ENCODE measurements at regions of chr12 and their contacts with region 1.

Region 1: GRCh38 chr12:89678225-89678624 is 30.4 kb downstream of the ATP2B1 start:
- DNase-seq: no peak
- ATAC-seq: peak; percentile 18
- H3K4me3 ChIP-seq: no peak overlapping the region
- H3K4me3 Mint-ChIP-seq: peak overlapping the region in 2 of 10 donors; percentile 9 to 25
- H3K27ac ChIP-seq: no peak overlapping the region
- H3K27ac Mint-ChIP-seq: peak overlapping the region in 1 of 9 donors; percentile 24
- H3K4me1 ChIP-seq: peaks cover 5 to 12% of the 10 kb centered on the region in 2 donors
- H3K4me1 Mint-ChIP-seq: peaks cover 6 to 85% (median 61%) of the 10 kb centered on the region in 7 donors
- H3K27me3 ChIP-seq: no peaks in the 10 kb centered on the region
- H3K27me3 Mint-ChIP-seq: no peaks in the 10 kb centered on the region

Region 2: DNA sequence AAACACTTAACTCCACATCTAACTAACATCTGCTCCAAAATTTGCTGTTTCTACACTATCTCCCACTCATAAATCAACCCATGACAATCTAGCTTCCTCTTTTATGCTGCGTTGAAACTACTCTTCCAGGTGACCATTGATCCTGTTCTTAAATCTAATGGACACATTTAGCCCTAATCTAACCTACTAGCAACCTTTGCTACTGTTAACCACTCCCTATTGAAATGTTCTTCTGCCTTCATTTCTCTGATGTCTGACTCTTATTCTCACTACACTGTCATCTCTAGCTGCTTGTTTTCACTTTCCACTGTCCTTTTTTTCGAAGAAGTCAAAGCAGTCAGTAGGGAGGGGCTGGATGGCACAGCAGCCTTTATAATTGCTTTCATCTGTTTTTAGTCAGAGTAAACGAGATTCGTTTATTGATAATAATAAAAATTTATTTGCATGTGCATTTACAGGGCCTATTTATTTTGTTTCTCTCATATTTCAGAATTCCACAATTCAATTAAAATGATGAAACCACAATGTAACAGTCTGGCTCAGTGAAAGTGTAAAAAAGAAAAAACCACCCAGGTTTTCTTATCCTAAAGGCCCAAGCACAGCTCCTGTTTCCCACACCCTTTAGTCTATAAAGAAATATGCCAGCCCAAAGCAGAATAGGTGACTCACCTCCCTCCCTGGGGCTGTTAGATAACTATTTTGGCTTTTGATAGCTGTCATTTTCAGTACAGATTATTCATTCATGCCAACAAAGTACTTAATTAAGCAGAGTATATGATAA is 14.5 kb before region 1 on chr12:
- CTCF ChIA-PET with region 1: no interaction called
- POLR2A ChIA-PET with region 1: interaction called, 3 read pairs
- intact Hi-C with region 1: loop called in 1 of 2 experiments (anchors 1 kb)
- DNase-seq: peak in 3 of 9 donors; percentile 2 to 15 (median 10)
- ATAC-seq: peak; percentile 62
- H3K4me3 ChIP-seq: no peak overlapping the region
- H3K4me3 Mint-ChIP-seq: peak overlapping the region in 9 of 10 donors; percentile 3 to 48 (median 11)
- H3K27ac ChIP-seq: no peak overlapping the region
- H3K27ac Mint-ChIP-seq: peak overlapping the region in 6 of 9 donors; percentile 21 to 28 (median 27)
- H3K4me1 ChIP-seq: peaks cover 30 to 36% of the 10 kb centered on the region in 2 donors
- H3K4me1 Mint-ChIP-seq: peaks cover 16 to 78% (median 74%) of the 10 kb centered on the region in 7 donors
- H3K27me3 ChIP-seq: no peaks in the 10 kb centered on the region
- H3K27me3 Mint-ChIP-seq: no peaks in the 10 kb centered on the region

Region 3: GRCh38 chr12:89690925-89691324 is 12.7 kb after region 1 on chr12:
- CTCF ChIA-PET with region 1: no interaction called
- POLR2A ChIA-PET with region 1: interaction called, 3 read pairs
- intact Hi-C with region 1: loop called in 1 of 2 experiments (anchors 2 kb)
- DNase-seq: no peak
- ATAC-seq: no peak
- H3K4me3 ChIP-seq: no peak overlapping the region
- H3K4me3 Mint-ChIP-seq: no peak overlapping the region
- H3K27ac ChIP-seq: no peak overlapping the region
- H3K27ac Mint-ChIP-seq: peak overlapping the region in 1 of 9 donors; percentile 55
- H3K4me1 ChIP-seq: peaks cover 6 to 12% of the 10 kb centered on the region in 2 donors
- H3K4me1 Mint-ChIP-seq: peaks cover 2 to 79% (median 70%) of the 10 kb centered on the region in 7 donors
- H3K27me3 ChIP-seq: no peaks in the 10 kb centered on the region
- H3K27me3 Mint-ChIP-seq: no peaks in the 10 kb centered on the region